HEK293 (cell line): ENCODE measurements at regions of chr6 and their contacts with region 1.

Region 1: DNA sequence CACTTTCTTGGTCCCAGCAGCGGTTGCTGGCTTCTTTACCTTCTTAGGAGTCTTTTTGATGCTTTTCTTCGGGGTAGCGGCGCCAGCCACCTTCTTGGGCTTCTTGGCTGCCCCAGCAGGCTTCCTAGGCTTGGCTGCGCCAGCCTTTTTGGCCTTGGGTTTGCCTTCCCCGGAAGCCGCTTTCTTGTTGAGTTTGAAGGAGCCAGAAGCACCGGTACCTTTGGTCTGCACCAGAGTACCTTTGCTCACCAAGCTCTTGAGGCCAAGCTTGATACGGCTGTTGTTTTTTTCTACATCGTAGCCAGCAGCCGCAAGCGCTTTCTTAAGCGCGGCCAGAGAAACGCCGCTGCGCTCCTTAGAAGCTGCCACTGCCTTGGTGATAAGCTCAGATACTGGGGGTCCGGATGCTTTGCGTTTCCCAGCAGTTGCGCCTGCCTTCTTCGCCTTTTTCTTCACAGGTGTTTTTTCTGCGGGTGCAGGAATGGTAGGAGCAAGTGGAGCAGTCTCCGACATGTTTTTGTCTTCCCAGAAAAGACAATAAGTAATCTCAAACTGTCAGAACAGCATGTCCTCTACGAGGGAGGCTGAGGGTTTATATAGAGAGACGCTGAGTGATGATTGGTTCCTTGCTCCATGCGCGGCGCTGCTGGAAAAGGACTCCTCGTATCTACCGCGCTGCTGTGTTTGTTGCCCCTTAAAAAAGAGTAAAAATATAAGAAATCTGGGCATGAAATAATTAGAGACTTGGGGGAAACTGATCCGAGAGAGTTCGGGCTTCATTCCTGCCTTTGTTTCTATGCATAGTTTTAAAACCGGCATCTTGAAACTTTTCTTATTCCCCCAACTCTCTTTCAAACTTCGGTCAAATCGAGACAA is 130.3 kb upstream of the BTN3A2 start:
- H3K4me3 ChIP-seq: peak overlapping the region; percentile 45
- H3K27ac ChIP-seq: peak overlapping the region; percentile 8; the same call in 1 of the 2 replicates
- H3K4me1 ChIP-seq: no peaks in the 10 kb centered on the region
- CTCF ChIP-seq: no peak

Region 2: DNA sequence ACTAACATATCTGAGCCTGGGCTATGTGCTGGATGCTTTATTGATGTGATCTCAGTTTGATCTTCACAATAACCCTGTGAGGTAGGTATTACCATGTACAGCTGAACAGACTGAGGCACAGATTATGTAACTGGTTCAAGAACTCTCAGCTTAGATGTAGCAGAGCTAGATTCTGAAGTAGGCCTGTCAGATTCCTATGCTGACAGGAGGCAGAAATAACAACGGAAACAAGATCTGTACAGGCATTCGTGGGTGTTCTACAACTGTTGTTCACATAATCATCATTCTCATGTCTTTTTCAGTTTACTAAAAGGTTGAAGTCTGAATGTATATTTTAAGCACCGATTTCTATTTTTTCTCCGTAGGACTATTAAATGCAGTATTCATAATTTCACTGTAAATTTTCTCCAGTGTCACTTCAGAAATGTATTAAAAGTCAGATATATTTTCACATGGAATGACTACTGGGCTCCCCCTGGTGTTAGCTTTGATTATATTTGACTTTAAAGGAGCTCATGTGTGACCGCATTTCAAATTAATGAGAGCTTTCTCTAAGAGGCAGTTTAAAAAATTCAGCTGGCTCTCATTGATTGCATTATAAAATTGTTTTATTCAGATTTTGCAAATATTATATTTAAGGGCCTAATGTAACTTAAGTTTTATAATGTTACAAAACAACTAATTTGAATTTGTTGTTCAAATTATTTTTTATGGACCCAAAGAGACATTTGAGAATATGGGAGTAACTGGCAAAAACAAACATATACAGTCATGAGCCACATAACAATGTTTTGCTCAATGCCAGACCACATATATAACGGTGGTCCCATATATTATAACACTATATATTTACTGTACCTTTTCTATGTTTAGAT is 516.6 kb before region 1 on chr6:
- CTCF ChIA-PET with region 1: no interaction called
- POLR2A ChIA-PET with region 1: no interaction called
- H3K4me3 ChIP-seq: no peak overlapping the region
- H3K27ac ChIP-seq: no peak overlapping the region
- H3K4me1 ChIP-seq: no peaks in the 10 kb centered on the region
- CTCF ChIP-seq: no peak

Region 3: DNA sequence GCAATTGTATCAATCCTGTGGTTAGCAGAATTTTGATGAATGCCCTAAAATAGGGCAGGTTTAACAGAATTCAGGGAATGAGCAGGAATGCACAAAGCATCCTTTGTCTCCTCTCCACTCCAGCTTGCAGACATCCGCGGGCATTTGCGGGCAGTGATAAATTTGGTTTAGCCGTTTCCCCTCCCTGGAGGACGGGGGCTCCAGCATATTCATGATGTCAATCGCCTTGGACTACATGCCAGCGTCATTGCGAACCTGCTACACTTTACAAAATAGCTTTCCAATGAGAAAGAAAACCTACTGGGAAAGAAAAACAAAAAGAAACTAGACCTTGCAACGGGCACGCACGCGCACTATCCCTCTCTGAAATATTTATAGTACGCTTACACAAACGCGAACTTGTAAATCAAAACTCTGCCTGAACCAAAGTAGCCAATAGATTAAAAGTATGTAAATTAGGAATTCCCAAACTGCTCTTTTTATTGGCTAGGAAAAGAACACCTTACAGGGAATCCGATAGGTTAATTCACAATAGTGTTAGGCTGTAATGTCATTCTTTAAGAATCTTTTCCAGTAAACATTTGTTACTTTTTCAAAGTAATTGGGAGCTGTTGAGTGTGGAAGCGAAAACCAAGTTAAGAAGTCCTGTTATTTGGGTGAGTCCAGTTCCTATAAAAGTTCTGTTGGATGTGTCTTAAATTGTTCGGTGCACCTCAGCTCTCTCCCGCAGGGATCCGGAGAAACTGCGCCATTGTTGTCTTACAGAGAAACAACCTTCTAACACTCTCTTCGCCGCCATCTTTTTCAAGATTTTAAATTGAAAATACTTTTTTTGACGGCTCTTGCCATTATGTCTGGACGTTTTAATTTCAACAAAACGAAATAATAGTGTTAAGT is 10.8 kb before region 1 on chr6:
- CTCF ChIA-PET with region 1: no interaction called
- POLR2A ChIA-PET with region 1: interaction called, 18 read pairs
- H3K4me3 ChIP-seq: peak overlapping the region; percentile 68
- H3K27ac ChIP-seq: peak overlapping the region; percentile 61
- H3K4me1 ChIP-seq: no peaks in the 10 kb centered on the region
- CTCF ChIP-seq: no peak

Region 4: DNA sequence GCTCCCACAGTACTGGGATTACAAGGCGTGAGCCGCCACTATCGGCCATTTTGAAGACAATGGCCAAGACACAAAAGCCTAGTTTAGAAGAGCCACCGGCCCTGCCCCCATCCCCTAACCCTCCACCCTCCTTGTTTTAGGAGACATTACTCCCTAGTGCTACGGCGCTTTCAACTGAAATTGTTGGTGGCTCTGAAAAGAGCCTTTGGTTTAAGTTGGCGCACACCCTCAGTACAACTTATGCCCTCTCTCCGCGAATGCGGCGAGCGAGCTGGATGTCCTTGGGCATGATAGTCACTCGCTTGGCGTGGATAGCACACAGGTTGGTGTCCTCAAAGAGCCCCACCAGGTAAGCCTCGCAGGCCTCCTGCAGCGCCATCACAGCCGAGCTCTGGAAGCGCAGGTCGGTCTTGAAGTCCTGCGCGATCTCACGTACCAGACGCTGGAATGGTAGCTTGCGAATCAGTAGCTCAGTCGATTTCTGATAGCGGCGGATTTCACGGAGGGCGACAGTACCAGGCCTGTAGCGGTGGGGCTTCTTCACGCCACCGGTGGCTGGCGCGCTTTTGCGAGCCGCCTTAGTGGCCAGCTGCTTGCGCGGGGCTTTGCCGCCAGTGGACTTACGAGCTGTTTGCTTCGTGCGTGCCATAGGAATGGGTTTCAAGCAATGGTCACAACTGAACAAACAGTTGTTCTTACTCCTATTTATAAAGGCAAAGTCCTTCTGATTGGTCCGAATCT is 15.5 kb after region 1 on chr6:
- CTCF ChIA-PET with region 1: interaction called, 16 read pairs
- POLR2A ChIA-PET with region 1: interaction called, 34 read pairs
- H3K4me3 ChIP-seq: peak overlapping the region; percentile 33
- H3K27ac ChIP-seq: peak overlapping the region; percentile 80
- H3K4me1 ChIP-seq: no peaks in the 10 kb centered on the region
- CTCF ChIP-seq: no peak

Region 5: GRCh38 chr6:26258200-26258977 is 23.7 kb after region 1 on chr6:
- CTCF ChIA-PET with region 1: interaction called, 11 read pairs
- POLR2A ChIA-PET with region 1: no interaction called
- H3K4me3 ChIP-seq: no peak overlapping the region
- H3K27ac ChIP-seq: no peak overlapping the region
- H3K4me1 ChIP-seq: no peaks in the 10 kb centered on the region
- CTCF ChIP-seq: no peak

Region 6: DNA sequence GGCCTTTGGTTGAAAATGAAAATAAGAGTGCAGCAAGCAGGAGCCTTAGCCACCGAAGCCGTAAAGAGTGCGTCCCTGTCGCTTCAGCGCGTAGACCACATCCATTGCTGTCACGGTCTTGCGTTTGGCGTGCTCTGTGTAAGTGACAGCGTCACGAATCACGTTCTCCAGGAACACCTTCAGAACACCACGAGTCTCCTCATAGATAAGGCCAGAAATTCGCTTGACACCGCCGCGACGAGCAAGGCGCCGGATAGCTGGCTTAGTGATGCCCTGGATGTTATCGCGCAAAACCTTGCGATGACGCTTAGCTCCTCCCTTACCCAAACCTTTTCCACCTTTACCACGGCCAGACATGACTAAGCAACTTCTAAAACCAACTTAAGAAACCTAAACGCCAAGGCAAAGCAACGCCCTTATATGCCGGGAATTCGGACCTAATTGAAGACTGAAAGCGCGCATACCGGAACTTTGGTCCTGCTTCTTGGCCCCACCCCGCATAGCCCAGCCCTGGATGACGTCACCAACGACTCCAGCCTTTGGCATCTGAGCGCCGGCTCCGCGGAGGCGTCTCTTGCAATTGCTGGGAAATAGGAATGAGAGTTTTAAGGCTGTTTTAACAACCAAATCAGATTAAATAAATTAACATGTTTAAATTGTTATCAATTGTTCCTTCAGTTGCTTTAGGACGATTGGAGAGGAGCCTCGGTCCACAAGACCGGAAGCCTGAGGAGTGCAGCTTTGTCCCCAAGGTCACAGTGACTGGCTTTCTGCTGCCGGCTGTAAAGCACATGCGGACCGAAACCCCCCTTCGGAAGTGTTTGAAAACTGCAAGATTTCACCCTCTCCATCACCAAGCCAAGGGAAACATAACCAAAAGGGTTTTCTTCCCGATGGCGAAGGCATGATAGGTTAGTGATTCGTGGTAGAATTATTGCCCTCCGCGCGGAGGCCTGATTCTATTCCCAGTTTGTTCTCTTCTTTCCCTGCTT is 50.8 kb after region 1 on chr6:
- CTCF ChIA-PET with region 1: no interaction called
- POLR2A ChIA-PET with region 1: no interaction called
- H3K4me3 ChIP-seq: peak overlapping the region; percentile 67
- H3K27ac ChIP-seq: peak overlapping the region; percentile 65
- H3K4me1 ChIP-seq: no peaks in the 10 kb centered on the region
- CTCF ChIP-seq: no peak